Activated CD8-positive, alpha-beta memory T cell treated with anti-CD3 and anti-CD28 coated beads, Interleukin-2, amount 10 ng/mL, durations not matched to agents 7 days and 5 days (primary cell): ENCODE measurements at regions of chr2 and their contacts with region 1.

Region 1: GRCh38 chr2:174465327-174465726 is 21.5 kb downstream of the GPR155 start:
- DNase-seq: no peak
- ATAC-seq: no peak
- H3K4me3 Mint-ChIP-seq: no peak overlapping the region
- H3K27ac Mint-ChIP-seq: no peak overlapping the region
- H3K4me1 Mint-ChIP-seq: no peaks in the 10 kb centered on the region
- H3K27me3 Mint-ChIP-seq: no peaks in the 10 kb centered on the region

Region 2: DNA sequence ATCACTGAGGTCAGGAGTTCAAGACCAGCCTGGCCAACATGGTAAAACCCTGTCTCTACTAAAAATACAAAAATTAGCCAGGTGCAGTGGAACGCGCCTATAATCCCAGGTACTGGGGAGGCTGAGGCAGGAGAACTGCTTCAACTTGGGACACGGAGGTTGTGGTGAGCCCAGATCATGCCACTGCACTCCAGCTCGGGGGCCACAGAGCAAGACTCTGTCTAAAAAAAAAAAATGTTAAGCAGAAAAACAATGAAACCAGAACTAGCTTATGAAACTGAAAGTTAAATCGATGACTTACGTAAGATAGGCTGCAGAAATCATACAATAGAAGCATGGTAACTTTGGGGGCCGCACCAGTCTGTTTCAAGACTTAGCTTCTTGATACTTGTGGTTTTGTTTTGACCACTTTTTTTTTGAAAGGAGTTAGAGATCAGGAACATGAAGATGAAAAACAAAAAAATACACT is 27.7 kb after region 1 on chr2:
- CTCF ChIA-PET with region 1: interaction called, 56 read pairs
- DNase-seq: peak; percentile 87
- ATAC-seq: peak; percentile 85
- H3K4me3 Mint-ChIP-seq: peak overlapping the region; percentile 74
- H3K27ac Mint-ChIP-seq: peak overlapping the region; percentile 99
- H3K4me1 Mint-ChIP-seq: peaks cover 65% of the 10 kb centered on the region
- H3K27me3 Mint-ChIP-seq: no peaks in the 10 kb centered on the region

Region 3: DNA sequence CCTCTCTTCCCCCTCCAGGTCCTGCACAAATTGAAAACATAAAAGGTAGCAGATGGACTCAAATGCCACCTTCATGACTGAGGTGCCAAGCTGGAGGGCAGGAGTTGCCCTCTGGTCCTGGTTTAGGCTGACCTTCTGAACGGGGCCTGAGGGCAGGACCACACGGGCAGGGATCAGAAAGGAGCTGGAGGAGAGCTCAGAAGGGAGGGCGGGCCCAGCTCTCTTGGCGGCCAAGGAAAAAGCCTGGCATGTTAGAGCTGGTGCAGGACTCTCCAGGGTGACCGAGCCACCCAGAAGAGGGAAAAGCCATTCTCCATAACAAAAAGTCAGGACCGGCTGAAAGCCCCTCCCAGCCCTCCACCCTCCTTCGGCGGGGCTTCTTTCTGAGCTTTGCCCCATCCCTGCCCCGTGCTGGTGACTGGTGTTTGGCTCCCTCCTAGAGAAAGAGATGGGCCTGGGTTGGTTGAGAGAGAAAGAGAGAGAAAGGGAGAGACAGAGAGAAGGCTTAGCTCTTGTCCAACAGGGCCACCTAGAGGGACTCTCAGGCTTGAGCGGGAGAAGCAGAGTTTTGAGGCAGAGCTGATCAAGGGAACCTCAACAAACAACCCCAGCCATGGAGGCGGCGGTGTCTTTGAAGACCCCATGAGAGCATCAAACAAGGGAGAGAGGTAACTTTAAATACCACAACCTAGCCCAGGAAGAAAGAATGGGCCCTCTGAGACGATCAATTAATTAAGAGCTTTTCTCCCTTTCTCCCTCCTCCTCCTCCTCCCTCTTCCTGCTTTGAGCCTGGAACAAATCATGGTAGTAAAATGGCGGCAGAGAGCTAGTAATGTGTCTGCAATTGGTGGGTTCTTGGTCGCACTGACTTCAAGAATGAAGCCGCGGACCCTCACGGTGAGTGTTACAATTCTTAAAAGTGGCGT is 81.5 kb after region 1 on chr2:
- CTCF ChIA-PET with region 1: interaction called, 99 read pairs
- DNase-seq: peak; percentile 70
- ATAC-seq: peak; percentile 89
- H3K4me3 Mint-ChIP-seq: no peak overlapping the region
- H3K27ac Mint-ChIP-seq: no peak overlapping the region
- H3K4me1 Mint-ChIP-seq: peaks cover 9% of the 10 kb centered on the region
- H3K27me3 Mint-ChIP-seq: no peaks in the 10 kb centered on the region

Region 4: GRCh38 chr2:174568425-174568824 is 103.1 kb after region 1 on chr2:
- CTCF ChIA-PET with region 1: interaction called, 16 read pairs
- DNase-seq: peak; percentile 36
- ATAC-seq: peak; percentile 63
- H3K4me3 Mint-ChIP-seq: no peak overlapping the region
- H3K27ac Mint-ChIP-seq: peak overlapping the region; percentile 24
- H3K4me1 Mint-ChIP-seq: peaks cover 53% of the 10 kb centered on the region
- H3K27me3 Mint-ChIP-seq: no peaks in the 10 kb centered on the region

Region 5: GRCh38 chr2:174688079-174688478 is 222.8 kb after region 1 on chr2:
- CTCF ChIA-PET with region 1: interaction called, 16 read pairs
- DNase-seq: no peak
- ATAC-seq: peak; percentile 54
- H3K4me3 Mint-ChIP-seq: no peak overlapping the region
- H3K27ac Mint-ChIP-seq: no peak overlapping the region
- H3K4me1 Mint-ChIP-seq: peaks cover 38% of the 10 kb centered on the region
- H3K27me3 Mint-ChIP-seq: no peaks in the 10 kb centered on the region